ENCODE measurements at regions of chr9 and their contacts with region 1.

Region 1: DNA sequence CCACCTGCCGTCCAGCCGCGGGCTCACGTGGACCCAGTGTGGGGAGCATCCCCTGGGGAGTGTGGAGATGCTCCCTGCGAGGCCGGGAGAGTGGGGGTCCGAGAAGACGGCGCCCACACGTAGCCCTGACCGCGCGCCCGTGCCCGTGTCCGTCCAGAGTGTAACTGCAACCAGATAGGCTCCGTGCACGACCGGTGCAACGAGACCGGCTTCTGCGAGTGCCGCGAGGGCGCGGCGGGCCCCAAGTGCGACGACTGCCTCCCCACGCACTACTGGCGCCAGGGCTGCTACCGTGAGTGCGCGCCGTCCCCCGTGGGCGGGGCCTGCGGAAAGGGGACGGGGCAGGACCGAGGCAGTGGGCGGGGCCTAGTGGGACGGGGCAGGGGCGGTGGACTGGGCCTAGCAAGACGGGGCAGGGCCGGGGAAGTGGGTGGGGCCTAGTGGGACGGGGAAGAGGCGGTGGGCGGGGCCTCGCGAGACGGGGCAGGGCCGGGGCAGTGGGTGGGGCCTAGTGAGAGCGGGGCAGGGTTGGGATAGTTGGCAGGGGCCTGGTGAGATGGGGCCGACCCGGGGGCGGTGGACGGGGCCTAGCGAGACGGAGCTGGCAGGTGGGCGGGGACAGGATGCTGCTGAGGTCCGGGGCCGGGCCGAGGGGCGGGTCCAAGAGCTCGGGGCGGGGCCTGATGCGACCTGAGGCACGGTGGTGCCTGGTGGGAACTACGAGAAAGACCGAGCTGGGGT is 79.1 kb downstream of the NTNG2 start:
- DNase-seq: peak; percentile 99
- H3K4me3 ChIP-seq: peak overlapping the region; percentile 55 to 64
- H3K27ac ChIP-seq: peak overlapping the region in 1 of 2 experiments; percentile 65; a peak in 2 of 4 replicates
- H3K4me1 ChIP-seq: peaks cover 0 to 28% of the 10 kb centered on the region in 2 experiments; a peak in 1 of 4 replicates
- H3K27me3 ChIP-seq: no peaks in the 10 kb centered on the region
- CTCF ChIP-seq: no peak
- EP300 ChIP-seq: no peak
- RAD21 ChIP-seq: no peak

Region 2: DNA sequence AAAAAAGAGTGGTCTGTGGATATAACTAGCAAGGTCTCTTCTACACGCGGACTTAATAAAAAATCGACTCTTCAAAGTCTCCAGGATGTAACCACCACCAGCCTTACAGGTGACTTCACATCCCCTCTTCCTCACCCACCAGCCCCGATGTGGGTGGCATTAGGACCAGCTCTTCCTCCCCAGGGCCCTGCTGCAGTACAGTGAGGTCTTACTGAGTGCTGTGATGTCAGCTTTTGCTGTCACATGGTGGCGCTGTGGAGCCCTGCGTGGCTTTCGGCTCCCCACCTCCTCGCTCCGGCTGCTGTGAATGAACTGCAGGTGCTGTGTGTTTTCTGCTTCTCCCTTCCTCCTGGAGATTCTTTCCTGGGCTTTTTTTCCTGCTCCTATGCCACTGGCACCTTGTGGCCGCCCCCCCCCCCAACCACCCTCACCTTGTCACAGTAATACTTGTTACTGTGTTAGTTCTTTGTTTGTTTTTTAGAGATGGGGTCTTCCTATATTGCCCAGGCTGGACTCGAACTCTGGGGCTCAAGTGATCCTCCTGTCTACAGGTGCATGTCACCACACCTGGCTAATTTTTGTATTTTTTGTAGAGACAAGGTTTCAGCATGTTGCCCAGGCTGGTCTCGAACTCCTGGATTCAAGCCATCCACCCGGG is 485.3 kb before region 1 on chr9:
- CTCF ChIA-PET with region 1: interaction called, 131 read pairs
- POLR2A ChIA-PET with region 1: no interaction called
- DNase-seq: peak; percentile 86
- H3K4me3 ChIP-seq: peak overlapping the region in 1 of 2 experiments; percentile 20; a peak in 1 of 4 replicates
- H3K27ac ChIP-seq: no peak overlapping the region
- H3K4me1 ChIP-seq: no peaks in the 10 kb centered on the region
- H3K27me3 ChIP-seq: no peaks in the 10 kb centered on the region; the same call in 1 of the 2 replicates
- CTCF ChIP-seq: peak; percentile 79
- EP300 ChIP-seq: no peak
- RAD21 ChIP-seq: peak; percentile 80

Region 3: GRCh38 chr9:131885144-131885609 is 355.7 kb before region 1 on chr9:
- CTCF ChIA-PET with region 1: interaction called, 13 read pairs
- POLR2A ChIA-PET with region 1: no interaction called
- DNase-seq: peak; percentile 84
- H3K4me3 ChIP-seq: no peak overlapping the region
- H3K27ac ChIP-seq: peak overlapping the region in 1 of 2 experiments; percentile 85; a peak in 2 of 4 replicates
- H3K4me1 ChIP-seq: peaks cover 6 to 42% of the 10 kb centered on the region in 2 experiments; a peak in 2 of 4 replicates
- H3K27me3 ChIP-seq: no peaks in the 10 kb centered on the region
- CTCF ChIP-seq: no peak
- EP300 ChIP-seq: peak in 1 of 2 experiments; percentile 98; a peak in 2 of 4 replicates
- RAD21 ChIP-seq: peak; percentile 38; the same call in 1 of the 2 replicates

Region 4: GRCh38 chr9:132169672-132170392 is 71.1 kb before region 1 on chr9:
- CTCF ChIA-PET with region 1: interaction called, 218 read pairs
- POLR2A ChIA-PET with region 1: interaction called, 5 read pairs
- DNase-seq: peak; percentile 80
- H3K4me3 ChIP-seq: peak overlapping the region in 1 of 2 experiments; percentile 38; a peak in 1 of 4 replicates
- H3K27ac ChIP-seq: no peak overlapping the region
- H3K4me1 ChIP-seq: peaks cover 0 to 31% of the 10 kb centered on the region in 2 experiments; a peak in 1 of 4 replicates
- H3K27me3 ChIP-seq: no peaks in the 10 kb centered on the region
- CTCF ChIP-seq: peak; percentile 76
- EP300 ChIP-seq: no peak
- RAD21 ChIP-seq: peak; percentile 69

Region 5: DNA sequence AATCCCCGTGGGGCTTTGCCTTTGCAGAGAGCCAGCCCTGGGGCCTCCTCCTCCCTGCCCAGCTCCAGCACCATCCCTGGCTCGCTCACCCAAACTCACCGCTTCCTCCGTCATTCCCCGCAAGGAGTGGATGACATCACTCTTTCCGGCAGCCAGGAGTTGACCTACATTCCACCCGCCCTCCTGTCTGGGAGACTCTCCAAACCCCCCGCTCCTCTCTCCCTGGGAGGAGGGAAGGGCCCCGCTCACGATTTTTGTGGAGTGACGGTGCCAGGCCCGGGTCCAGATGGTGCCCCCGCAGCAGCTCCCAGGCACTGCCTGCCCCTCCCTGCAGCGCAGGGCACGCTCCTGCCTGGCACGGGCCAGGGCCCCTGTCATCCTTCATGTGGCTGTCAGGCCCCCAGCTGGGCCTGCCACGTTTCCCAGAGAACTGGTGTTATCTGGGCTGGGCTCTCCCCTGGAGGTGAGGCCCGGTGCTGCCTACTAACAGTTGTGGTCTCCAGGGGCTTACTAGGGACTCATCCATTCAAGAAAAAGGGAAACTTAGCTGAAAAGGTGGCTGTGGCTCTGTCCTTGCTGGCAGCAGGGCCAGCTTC is 26.8 kb before region 1 on chr9:
- CTCF ChIA-PET with region 1: interaction called, 12 read pairs
- POLR2A ChIA-PET with region 1: no interaction called
- DNase-seq: peak; percentile 90
- H3K4me3 ChIP-seq: peak overlapping the region; percentile 11 to 19; a peak in 1 of 4 replicates
- H3K27ac ChIP-seq: peak overlapping the region; percentile 64 to 71; a peak in 3 of 4 replicates
- H3K4me1 ChIP-seq: peaks cover 6 to 27% of the 10 kb centered on the region in 2 experiments; a peak in 1 of 4 replicates
- H3K27me3 ChIP-seq: no peaks in the 10 kb centered on the region
- CTCF ChIP-seq: no peak
- EP300 ChIP-seq: peak; percentile 27 to 68; a peak in 2 of 4 replicates
- RAD21 ChIP-seq: peak; percentile 34

Region 6: DNA sequence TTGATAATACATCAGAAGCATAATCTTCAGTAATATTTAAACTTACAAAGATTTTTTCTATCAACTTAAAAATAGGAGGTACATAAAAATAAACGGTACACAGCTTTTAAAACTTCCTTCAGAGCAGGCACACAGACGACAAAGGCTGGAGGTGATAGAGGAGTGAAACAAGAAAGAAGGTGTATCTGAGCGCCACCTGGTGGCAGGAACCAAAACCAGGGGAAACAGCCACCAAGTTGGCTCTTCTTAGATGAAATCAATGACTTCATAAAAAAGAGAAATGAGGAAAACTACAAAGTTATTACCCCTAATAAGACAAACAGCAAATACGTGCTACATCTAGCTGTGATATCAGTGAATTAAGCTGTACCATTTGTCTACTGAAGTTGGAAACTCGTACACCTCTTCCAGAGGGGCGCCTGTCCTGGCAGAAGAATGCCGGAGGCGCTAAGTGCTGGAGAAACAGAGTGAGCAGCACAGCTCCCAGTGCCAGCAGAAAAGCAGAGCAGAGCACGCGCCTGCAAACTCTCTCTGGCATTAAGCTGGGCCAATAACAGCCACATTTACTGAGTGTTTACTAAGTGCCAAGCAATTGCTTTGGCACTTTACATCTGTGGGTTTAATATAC is 27.9 kb after region 1 on chr9:
- CTCF ChIA-PET with region 1: interaction called, 34 read pairs
- POLR2A ChIA-PET with region 1: no interaction called
- DNase-seq: peak; percentile 70
- H3K4me3 ChIP-seq: no peak overlapping the region; a peak in 1 of 4 replicates
- H3K27ac ChIP-seq: peak overlapping the region; percentile 18 to 55; a peak in 2 of 4 replicates
- H3K4me1 ChIP-seq: peaks cover 0 to 3% of the 10 kb centered on the region in 2 experiments; a peak in 1 of 4 replicates
- H3K27me3 ChIP-seq: no peaks in the 10 kb centered on the region
- CTCF ChIP-seq: peak; percentile 97
- EP300 ChIP-seq: no peak
- RAD21 ChIP-seq: peak; percentile 78

Region 7: DNA sequence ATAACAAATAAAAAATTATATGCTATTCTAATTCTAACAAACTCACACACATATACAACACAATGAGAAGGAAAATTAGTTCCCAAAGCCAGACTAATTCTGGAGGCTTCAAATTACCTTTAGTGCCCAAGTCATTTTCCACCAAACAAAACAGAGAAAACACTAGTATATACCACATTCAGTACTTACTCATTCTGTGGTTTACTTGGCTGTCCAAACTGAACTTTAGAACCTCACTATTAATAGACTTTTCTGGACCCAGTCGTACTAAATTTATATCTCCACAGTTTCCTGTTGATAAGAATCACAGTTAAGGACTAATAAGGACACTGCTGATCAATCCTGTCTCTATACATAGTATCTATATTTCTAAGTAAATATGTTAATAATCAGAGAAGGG is 47.4 kb after region 1 on chr9:
- CTCF ChIA-PET with region 1: no interaction called
- POLR2A ChIA-PET with region 1: no interaction called
- DNase-seq: no peak
- H3K4me3 ChIP-seq: no peak overlapping the region
- H3K27ac ChIP-seq: peak overlapping the region in 1 of 2 experiments; percentile 60; a peak in 2 of 4 replicates
- H3K4me1 ChIP-seq: 0 out of 4 replicates have a peak, but pooled peaks cover 0 to 2% of the 10 kb centered on the region in 2 experiments
- H3K27me3 ChIP-seq: no peaks in the 10 kb centered on the region
- CTCF ChIP-seq: no peak
- EP300 ChIP-seq: no peak
- RAD21 ChIP-seq: no peak